AG04450 (cell line): ENCODE measurements at regions of chr7 and their contacts with region 1.

Region 1: GRCh38 chr7:1123715-1124114 is 35.8 kb downstream of the GPER1 start:
- DNase-seq: peak; percentile 61
- H3K4me3 ChIP-seq: peak overlapping the region; percentile 7; the same call in 1 of the 2 replicates
- H3K27ac ChIP-seq: peak overlapping the region; percentile 70
- H3K27me3 ChIP-seq: no peaks in the 10 kb centered on the region
- CTCF ChIP-seq: peak; percentile 75

Region 2: GRCh38 chr7:1086588-1087464 is 36.9 kb before region 1 on chr7:
- CTCF ChIA-PET with region 1: interaction called, 36 read pairs
- POLR2A ChIA-PET with region 1: no interaction called
- DNase-seq: no peak
- H3K4me3 ChIP-seq: peak overlapping the region; percentile 59
- H3K27ac ChIP-seq: peak overlapping the region; percentile 47
- H3K27me3 ChIP-seq: no peaks in the 10 kb centered on the region
- CTCF ChIP-seq: peak; percentile 88

Region 3: DNA sequence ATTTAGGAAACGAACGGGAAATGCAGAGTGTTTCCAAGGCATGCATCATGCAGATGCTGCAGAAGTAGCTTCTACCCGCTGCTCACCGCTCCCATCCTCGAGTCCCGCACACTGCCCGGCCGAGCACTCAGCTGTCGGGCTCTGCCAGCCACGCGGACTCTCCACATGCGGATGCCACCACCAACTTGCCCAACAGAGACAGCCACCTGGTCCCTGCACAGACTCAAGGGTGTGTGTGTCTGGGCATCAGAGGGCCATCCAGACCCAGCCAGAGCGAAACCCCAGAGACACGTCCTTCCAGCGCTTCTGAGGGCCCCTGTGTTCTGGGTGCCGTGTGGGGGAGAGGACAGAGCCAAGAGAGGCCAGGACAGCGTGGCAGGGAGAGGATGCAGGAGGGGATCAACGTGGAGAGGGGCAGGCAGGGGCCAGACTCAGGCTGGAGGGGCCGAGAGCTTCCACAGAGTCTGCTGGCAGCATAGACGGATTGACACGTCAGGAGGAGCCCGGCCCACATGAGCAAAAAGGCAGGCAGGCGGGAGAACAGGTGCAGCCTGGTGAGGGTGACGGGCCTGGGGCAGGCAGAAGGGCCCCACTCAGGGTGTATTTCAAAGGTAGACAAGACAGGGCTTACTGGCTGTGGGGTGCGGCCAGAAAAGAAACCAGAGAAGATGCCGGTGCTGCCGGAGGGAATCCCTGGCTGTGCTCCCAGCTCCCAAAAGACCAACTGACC is 17.5 kb before region 1 on chr7:
- CTCF ChIA-PET with region 1: interaction called, 11 read pairs
- POLR2A ChIA-PET with region 1: no interaction called
- DNase-seq: no peak
- H3K4me3 ChIP-seq: no peak overlapping the region
- H3K27ac ChIP-seq: no peak overlapping the region
- H3K27me3 ChIP-seq: no peaks in the 10 kb centered on the region
- CTCF ChIP-seq: no peak

Region 4: GRCh38 chr7:1137510-1138167 is 13.9 kb after region 1 on chr7:
- CTCF ChIA-PET with region 1: interaction called, 18 read pairs
- POLR2A ChIA-PET with region 1: interaction called, 3 read pairs
- DNase-seq: no peak
- H3K4me3 ChIP-seq: peak overlapping the region; percentile 67
- H3K27ac ChIP-seq: no peak overlapping the region
- H3K27me3 ChIP-seq: peaks cover 2% of the 10 kb centered on the region
- CTCF ChIP-seq: no peak

Region 5: GRCh38 chr7:1144269-1144771 is 20.6 kb after region 1 on chr7:
- CTCF ChIA-PET with region 1: interaction called, 10 read pairs
- POLR2A ChIA-PET with region 1: no interaction called
- DNase-seq: no peak
- H3K4me3 ChIP-seq: no peak overlapping the region
- H3K27ac ChIP-seq: no peak overlapping the region
- H3K27me3 ChIP-seq: peaks cover 2% of the 10 kb centered on the region
- CTCF ChIP-seq: no peak